ENCODE measurements at regions of chr10 and their contacts with region 1.

Region 1: DNA sequence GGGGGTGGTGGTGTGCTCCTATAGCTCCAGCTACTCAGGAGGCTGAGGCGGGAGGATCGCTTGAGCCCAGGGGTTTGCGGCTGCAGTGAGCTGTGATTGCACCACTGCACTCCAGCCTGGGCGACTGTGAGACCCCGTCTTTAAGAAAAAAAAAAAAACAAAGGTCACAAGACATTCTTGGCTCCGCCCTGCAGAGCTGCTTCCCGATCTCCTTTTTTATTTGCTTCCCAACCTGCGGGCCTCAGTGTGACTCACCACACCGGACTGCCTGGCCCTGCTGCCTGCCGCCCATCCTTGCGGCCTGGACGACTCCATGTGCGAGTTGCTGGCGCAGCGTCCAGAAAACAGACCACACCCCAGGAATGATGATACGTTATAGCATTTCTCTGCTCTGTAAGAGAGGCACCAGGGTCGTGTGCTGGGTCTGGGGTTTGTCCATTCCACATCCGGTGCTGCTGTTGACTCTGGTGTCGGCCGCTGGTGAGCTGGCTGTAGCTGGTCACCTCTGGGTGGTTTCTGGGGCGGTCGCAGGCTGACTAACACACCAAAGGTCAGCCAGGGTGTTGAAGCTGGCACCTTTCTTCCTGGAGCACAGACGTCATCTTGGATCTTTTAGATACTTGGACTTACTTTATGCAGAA is 123.6 kb downstream of the TCF7L2 start:
- DNase-seq: peak; percentile 96
- H3K4me3 Mint-ChIP-seq: peak overlapping the region; percentile 69
- H3K27ac Mint-ChIP-seq: peak overlapping the region; percentile 97
- H3K4me1 Mint-ChIP-seq: peaks cover 39% of the 10 kb centered on the region
- H3K27me3 Mint-ChIP-seq: no peaks in the 10 kb centered on the region
- CTCF ChIP-seq: no peak

Region 2: GRCh38 chr10:112842832-112843360 is 230.8 kb before region 1 on chr10:
- CTCF ChIA-PET with region 1: no interaction called
- POLR2A ChIA-PET with region 1: no interaction called
- intact Hi-C with region 1: no loop called
- DNase-seq: no peak
- H3K4me3 Mint-ChIP-seq: no peak overlapping the region
- H3K27ac Mint-ChIP-seq: no peak overlapping the region
- H3K4me1 Mint-ChIP-seq: no peaks in the 10 kb centered on the region
- H3K27me3 Mint-ChIP-seq: no peaks in the 10 kb centered on the region
- CTCF ChIP-seq: no peak

Region 3: GRCh38 chr10:113000876-113001598 is 72.6 kb before region 1 on chr10:
- CTCF ChIA-PET with region 1: interaction called, 3 read pairs
- POLR2A ChIA-PET with region 1: no interaction called
- intact Hi-C with region 1: loop called (anchors 5 kb)
- DNase-seq: peak; percentile 18
- H3K4me3 Mint-ChIP-seq: peak overlapping the region; percentile 63
- H3K27ac Mint-ChIP-seq: peak overlapping the region; percentile 88
- H3K4me1 Mint-ChIP-seq: peaks cover 26% of the 10 kb centered on the region
- H3K27me3 Mint-ChIP-seq: no peaks in the 10 kb centered on the region
- CTCF ChIP-seq: peak; percentile 21

Region 4: DNA sequence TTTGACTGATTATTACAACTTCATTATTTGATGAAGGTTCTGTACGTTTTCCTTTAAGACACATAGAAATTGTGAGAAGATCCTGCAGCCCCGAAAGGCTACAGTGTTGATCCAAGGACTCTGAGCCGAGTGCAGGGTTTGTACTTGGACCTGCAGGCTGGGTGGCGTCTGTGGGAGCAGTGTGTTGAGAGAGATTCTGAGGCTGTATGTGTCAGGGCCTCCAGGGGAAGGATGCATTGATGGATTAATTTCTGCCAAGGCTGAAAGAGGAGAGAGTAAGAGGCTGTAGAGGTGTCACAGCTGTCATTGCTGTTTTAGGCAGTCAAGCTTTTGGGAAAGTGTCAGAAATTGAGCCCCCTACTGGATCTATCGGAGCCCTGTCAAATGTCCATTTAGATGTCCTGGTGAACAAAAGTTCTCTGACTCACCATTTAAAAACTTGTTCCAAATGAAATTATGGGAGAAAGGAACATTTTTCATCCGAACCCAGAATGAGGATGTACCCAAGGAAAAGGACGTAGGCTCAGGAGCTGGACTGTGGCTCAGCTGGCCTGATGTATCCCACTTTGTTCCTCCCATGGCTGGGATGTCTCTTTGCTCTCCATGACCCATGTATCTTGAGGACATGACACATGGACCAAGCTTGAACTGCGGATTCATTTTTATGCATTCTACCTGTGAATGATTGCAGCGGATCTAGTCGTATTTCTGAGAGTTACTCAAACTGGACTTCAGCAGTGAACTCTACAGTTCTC is 21.4 kb before region 1 on chr10:
- CTCF ChIA-PET with region 1: interaction called, 3 read pairs
- POLR2A ChIA-PET with region 1: interaction called, 171 read pairs
- intact Hi-C with region 1: no loop called
- DNase-seq: peak; percentile 30
- H3K4me3 Mint-ChIP-seq: no peak overlapping the region
- H3K27ac Mint-ChIP-seq: no peak overlapping the region
- H3K4me1 Mint-ChIP-seq: peaks cover 36% of the 10 kb centered on the region
- H3K27me3 Mint-ChIP-seq: no peaks in the 10 kb centered on the region
- CTCF ChIP-seq: peak; percentile 13

Region 5: GRCh38 chr10:113087165-113088029 is 13.7 kb after region 1 on chr10:
- CTCF ChIA-PET with region 1: interaction called, 4 read pairs
- POLR2A ChIA-PET with region 1: interaction called, 31 read pairs
- intact Hi-C with region 1: no loop called
- DNase-seq: peak; percentile 98
- H3K4me3 Mint-ChIP-seq: peak overlapping the region; percentile 35
- H3K27ac Mint-ChIP-seq: peak overlapping the region; percentile 91
- H3K4me1 Mint-ChIP-seq: peaks cover 29% of the 10 kb centered on the region
- H3K27me3 Mint-ChIP-seq: no peaks in the 10 kb centered on the region
- CTCF ChIP-seq: no peak

Region 6: GRCh38 chr10:113093188-113094113 is 19.8 kb after region 1 on chr10:
- CTCF ChIA-PET with region 1: interaction called, 3 read pairs
- POLR2A ChIA-PET with region 1: interaction called, 31 read pairs
- intact Hi-C with region 1: no loop called
- DNase-seq: peak; percentile 83
- H3K4me3 Mint-ChIP-seq: peak overlapping the region; percentile 51
- H3K27ac Mint-ChIP-seq: peak overlapping the region; percentile 36
- H3K4me1 Mint-ChIP-seq: peaks cover 21% of the 10 kb centered on the region
- H3K27me3 Mint-ChIP-seq: no peaks in the 10 kb centered on the region
- CTCF ChIP-seq: no peak

Region 7: GRCh38 chr10:113515161-113515560 is 441.5 kb after region 1 on chr10:
- CTCF ChIA-PET with region 1: no interaction called
- POLR2A ChIA-PET with region 1: no interaction called
- intact Hi-C with region 1: no loop called
- DNase-seq: no peak
- H3K4me3 Mint-ChIP-seq: no peak overlapping the region
- H3K27ac Mint-ChIP-seq: no peak overlapping the region
- H3K4me1 Mint-ChIP-seq: no peaks in the 10 kb centered on the region
- H3K27me3 Mint-ChIP-seq: peaks cover 32% of the 10 kb centered on the region
- CTCF ChIP-seq: no peak